Mammary epithelial cell (primary cell): ENCODE measurements at regions of chr17 and their contacts with region 1.

Region 1: GRCh38 chr17:51056813-51057510 is 63.7 kb downstream of the SPAG9 start:
- DNase-seq: peak; percentile 89
- H3K4me3 ChIP-seq: no peak overlapping the region
- H3K27ac ChIP-seq: peak overlapping the region; percentile 41
- H3K4me1 ChIP-seq: peaks cover 14% of the 10 kb centered on the region
- H3K27me3 ChIP-seq: no peaks in the 10 kb centered on the region
- CTCF ChIP-seq: peak; percentile 59 to 65

Region 2: DNA sequence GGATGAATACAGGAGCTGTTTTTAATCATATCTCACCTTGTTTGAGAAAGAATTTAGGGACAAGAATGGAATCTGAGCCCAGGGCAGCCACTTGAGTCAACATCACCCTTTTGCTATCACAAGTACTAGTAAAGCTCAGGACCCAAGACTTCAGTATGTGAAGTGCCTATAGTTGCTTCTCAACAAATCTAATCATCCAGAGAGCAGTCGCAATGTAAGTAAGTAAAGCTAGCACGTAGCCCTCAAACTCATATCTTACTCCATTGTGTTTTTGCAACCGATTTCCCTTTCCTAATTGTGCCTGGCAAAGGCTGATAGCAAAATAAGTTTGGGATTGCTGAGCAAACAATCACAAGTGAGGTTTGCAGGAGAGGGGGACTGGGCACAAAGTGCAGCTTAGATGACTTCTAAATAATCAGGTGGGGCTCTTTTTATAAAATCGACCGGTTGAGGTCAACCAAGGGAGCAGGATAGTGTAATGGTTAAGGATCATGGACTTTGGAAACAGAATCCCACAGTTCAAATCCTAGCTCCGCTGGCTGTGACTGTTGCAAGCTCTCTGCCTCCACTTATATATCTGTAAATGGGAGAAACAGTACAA is 203.8 kb before region 1 on chr17:
- CTCF ChIA-PET with region 1: interaction called, 6 read pairs
- dilution Hi-C with region 1: no loop called
- in situ Hi-C with region 1: no loop called
- intact Hi-C with region 1: loop called (anchors 5 kb)
- DNase-seq: no peak
- H3K4me3 ChIP-seq: no peak overlapping the region
- H3K27ac ChIP-seq: no peak overlapping the region
- H3K4me1 ChIP-seq: peaks cover 12% of the 10 kb centered on the region
- H3K27me3 ChIP-seq: no peaks in the 10 kb centered on the region
- CTCF ChIP-seq: no peak

Region 3: DNA sequence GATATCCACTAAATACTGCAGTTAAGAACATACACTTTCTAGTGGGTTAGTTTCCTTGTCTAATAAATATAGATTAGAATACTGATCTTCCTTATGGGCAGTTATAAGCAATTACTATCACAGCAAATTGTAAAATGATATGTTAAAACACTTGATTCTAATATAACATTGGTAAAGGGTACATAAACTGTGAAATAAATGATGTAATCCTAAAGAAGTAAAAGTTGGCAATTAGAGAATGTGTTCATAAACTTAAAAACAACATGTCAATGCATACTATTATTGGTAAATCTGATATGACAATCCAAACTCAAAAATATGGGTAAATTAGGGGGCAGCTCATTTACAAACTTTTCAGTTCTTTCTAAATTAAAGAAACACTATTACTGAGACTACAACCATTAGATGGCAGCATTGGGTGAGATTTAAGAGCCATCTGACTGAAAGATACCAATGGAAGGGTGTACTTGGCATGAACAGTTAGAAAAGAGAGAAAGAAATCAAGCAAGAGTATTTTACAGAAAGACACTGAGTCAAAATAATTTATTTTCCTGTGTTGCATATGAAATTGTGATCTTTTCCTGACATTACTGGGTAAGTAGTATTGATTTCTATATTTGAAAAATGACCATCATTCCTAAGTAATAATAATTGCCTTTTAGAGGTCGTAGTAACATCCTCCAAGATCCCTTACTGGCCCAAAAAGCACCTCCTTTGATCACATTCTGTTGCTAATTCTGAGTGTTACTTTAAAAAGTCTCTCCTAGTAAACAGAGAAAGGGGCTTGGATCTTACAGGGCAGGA is 55.9 kb before region 1 on chr17:
- CTCF ChIA-PET with region 1: interaction called, 7 read pairs
- dilution Hi-C with region 1: no loop called
- in situ Hi-C with region 1: no loop called
- intact Hi-C with region 1: loop called (anchors 1 kb)
- DNase-seq: peak; percentile 44
- H3K4me3 ChIP-seq: no peak overlapping the region
- H3K27ac ChIP-seq: no peak overlapping the region
- H3K4me1 ChIP-seq: no peaks in the 10 kb centered on the region
- H3K27me3 ChIP-seq: no peaks in the 10 kb centered on the region
- CTCF ChIP-seq: peak; percentile 39 to 45

Region 4: DNA sequence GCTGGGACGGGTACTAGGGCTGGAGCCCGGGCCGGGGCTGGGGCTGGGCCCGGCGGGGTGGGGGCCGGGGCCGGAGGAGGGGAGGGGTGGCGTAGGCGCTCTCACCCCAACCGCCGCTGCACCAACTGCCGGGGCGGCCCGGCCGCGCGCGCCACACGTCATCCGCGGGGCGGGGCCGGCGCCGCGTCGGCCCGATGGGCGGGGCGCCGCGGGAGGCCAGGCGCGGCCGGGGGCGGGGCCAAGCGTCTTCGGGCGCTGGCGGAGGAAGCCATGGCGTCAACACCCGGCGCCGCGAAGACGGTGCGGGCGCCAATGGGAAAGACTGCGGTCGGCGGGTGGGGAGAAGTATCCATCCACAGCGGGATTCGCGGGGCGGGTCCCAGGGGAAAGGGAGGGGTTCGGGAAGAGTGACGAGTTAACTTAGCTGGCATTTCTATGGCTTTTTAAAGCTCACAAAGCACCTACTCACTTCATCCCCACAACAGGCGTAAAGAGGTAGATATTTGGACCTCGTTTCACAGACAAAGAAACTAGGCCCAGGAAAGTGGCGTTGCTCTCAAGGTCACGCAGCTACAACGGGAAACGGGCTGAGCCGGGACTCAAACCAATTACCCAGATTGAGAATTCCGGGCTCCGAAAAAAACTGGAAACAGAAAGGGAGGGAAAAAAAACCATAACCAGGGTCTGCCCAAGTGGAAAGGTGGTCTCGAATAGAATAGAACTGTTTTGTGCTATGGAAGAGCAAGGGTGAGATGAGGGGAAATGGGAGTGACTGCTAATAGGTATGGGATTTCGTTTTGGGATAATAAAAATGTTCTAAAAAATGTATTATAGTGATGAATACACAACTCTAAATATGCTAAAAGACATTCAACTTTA is 64.0 kb after region 1 on chr17 and contains the start of gene SPAG9:
- CTCF ChIA-PET with region 1: no interaction called
- dilution Hi-C with region 1: no loop called
- in situ Hi-C with region 1: no loop called
- intact Hi-C with region 1: loop called (anchors 5 kb)
- DNase-seq: peak; percentile 97
- H3K4me3 ChIP-seq: peak within 1 kb of the TSS; percentile 66 to 100 (median 67)
- H3K27ac ChIP-seq: peak within 1 kb of the TSS; percentile 100
- H3K4me1 ChIP-seq: peaks cover 30% of the 10 kb centered on the region
- H3K27me3 ChIP-seq: no peaks in the 10 kb centered on the region
- CTCF ChIP-seq: no peak
- total RNA-seq, gene SPAG9: 80.4 to 95.3 TPM

Region 5: GRCh38 chr17:51135956-51136355 is 79.0 kb after region 1 on chr17:
- CTCF ChIA-PET with region 1: no interaction called
- dilution Hi-C with region 1: loop called (anchors 5 kb)
- in situ Hi-C with region 1: no loop called
- intact Hi-C with region 1: no loop called
- DNase-seq: no peak
- H3K4me3 ChIP-seq: no peak overlapping the region
- H3K27ac ChIP-seq: no peak overlapping the region
- H3K4me1 ChIP-seq: no peaks in the 10 kb centered on the region
- H3K27me3 ChIP-seq: no peaks in the 10 kb centered on the region
- CTCF ChIP-seq: no peak